ENCODE measurements at regions of chr7 and their contacts with region 1.

Region 1: DNA sequence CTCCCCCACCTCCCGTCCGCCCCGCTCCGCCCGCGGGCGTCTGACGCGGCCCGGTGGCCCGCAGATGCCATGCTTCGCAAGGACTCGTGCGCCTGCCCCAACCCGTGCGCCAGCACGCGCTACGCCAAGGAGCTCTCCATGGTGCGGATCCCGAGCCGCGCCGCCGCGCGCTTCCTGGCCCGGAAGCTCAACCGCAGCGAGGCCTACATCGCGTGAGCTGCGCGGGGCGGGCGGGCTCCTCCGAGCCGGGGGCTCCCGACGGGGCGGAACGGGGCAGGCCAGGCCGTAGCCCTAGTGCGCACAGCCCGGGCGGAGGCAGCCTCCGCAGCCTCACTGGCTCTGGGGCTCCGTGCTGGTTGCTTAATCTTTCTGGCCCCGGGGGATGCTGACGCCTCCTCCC is 2.8 kb downstream of the ASIC3 start:
- DNase-seq: no peak
- H3K4me3 ChIP-seq: no peak overlapping the region
- CTCF ChIP-seq: no peak
- POLR2A ChIP-seq: no peak

Region 2: DNA sequence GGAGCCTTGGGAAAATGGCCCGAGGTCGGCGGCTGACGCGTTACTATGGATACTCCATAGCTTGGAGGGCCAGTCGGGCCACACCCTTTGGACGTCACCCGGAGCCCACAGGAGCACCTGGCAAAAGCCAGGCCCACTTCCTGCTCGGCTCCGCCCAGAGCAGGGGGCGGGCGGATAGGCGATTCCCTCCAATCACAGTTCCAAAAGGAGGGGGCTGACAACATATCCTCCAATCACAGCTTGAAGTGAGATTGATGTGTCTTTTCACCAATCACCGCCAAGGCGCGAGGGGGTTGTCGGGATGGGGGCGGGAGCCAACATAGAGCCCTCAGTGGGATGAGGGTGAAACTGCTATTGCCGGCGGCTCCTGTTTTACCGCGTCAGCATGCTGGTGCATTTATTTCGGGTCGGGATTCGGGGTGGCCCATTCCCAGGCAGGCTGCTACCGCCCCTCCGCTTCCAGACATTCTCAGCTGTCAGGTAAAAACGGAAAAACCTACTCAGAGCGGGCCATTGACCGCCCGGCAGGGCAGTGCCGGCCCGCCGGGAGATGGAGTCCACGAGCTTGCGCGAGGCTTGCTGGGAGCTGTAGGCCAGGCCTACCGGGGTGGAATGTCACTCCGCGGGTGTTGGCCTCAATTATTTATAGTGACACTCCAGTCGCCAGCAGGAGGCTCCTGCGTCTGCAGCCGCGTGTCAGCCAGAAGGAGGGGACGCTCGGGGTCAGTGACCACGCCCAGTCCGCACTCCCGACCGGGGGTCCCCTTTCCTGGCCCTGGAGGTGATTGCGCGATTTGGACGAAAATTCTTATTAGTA is 22.8 kb before region 1 on chr7 and contains the start of gene ABCB8:
- intact Hi-C with region 1: no loop called
- DNase-seq: peak; percentile 100
- H3K4me3 ChIP-seq: peak within 1 kb of the TSS; percentile 51
- CTCF ChIP-seq: peak in 1 of 3 donors; percentile 10
- POLR2A ChIP-seq: no peak
- total RNA-seq, gene ABCB8: 22.9 to 35.2 (median 27.6) TPM

Region 3: DNA sequence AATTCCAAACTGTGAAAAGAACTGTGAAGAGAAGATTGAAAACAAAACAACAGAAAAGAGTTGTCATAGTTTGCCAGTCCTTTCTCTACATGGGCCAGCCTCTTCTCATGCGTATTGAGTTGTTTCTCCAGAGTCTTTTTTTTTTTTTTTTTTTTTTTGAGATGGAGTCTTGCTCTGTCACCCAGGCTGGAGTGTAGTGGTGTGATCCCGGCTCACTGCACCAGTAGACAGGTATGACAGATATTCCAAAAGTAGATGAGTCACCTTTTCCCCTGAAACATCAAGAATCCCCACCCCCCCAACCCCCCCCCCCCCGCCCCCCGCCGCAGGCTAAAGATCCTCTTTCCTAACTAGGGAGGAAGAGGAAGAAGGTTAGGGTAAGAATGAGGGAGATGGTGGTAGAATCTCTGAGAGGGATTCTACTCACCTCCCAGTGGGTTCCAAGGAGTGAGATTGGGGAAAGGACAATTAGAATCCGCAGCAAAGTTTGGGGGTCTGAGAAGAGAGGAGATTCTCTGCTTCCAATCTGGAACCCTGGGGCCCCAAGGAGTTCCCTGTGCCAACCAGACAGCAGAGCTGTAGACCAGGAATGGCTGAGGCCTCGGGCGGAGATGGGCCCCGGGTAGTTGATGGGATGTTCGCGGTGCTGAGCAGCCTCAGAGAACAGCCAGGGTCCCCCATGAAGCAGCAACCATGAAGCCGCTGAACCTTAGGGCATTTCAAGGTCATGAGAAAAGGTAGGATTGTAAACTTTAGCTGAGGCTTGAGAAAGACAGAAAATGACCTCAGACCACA is 1400.4 kb after region 1 on chr7:
- intact Hi-C with region 1: no loop called
- DNase-seq: peak in 1 of 2 donors; percentile 56
- H3K4me3 ChIP-seq: no peak overlapping the region
- CTCF ChIP-seq: no peak
- POLR2A ChIP-seq: no peak

Region 4: GRCh38 chr7:152582981-152583380 is 1531.9 kb after region 1 on chr7:
- intact Hi-C with region 1: loop called (anchors 5 kb)
- DNase-seq: peak in 1 of 2 donors; percentile 43
- H3K4me3 ChIP-seq: no peak overlapping the region
- CTCF ChIP-seq: no peak
- POLR2A ChIP-seq: no peak